H1 (cell line): ENCODE measurements at regions of chr1 and their contacts with region 1.

Region 1: DNA sequence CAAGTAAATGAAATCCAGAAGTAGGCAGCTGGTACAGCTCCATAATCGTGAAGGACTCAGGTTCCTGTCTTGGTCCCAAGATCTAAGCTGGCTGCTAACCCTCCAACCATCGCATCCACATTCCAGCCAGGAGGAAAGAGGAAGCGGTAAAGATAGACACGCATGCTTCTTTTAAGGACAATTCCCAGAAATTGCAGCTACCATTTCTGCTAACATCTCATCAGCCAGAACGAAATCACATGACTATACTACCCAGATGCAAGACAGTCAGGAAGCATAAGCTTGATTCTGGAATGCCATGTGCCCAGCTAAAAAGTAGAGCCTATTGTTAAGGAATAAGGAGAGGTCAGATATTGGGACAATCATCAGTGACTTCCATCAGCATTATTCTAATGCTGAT is 110.4 kb downstream of the EPHB2 start:
- DNase-seq: no peak
- H3K4me3 ChIP-seq: no peak overlapping the region
- H3K27ac ChIP-seq: no peak overlapping the region
- H3K4me1 ChIP-seq: peaks cover 0 to 5% (median 1%) of the 10 kb centered on the region in 4 experiments; a peak in 4 of 7 replicates
- H3K27me3 ChIP-seq: no peaks in the 10 kb centered on the region
- CTCF ChIP-seq: no peak
- EP300 ChIP-seq: no peak
- POLR2A ChIP-seq: no peak
- RAD21 ChIP-seq: no peak

Region 2: GRCh38 chr1:22575532-22576149 is 245.4 kb before region 1 on chr1:
- CTCF ChIA-PET with region 1: no interaction called
- POLR2A ChIA-PET with region 1: no interaction called
- DNase-seq: no peak
- H3K4me3 ChIP-seq: no peak overlapping the region
- H3K27ac ChIP-seq: no peak overlapping the region
- H3K4me1 ChIP-seq: peaks cover 0 to 7% (median 1%) of the 10 kb centered on the region in 4 experiments; a peak in 3 of 7 replicates
- H3K27me3 ChIP-seq: no peaks in the 10 kb centered on the region
- CTCF ChIP-seq: no peak
- EP300 ChIP-seq: no peak
- POLR2A ChIP-seq: no peak
- RAD21 ChIP-seq: no peak

Region 3: GRCh38 chr1:22808676-22809483 is 12.1 kb before region 1 on chr1:
- CTCF ChIA-PET with region 1: interaction called, 18 read pairs
- POLR2A ChIA-PET with region 1: interaction called, 4 read pairs
- DNase-seq: no peak
- H3K4me3 ChIP-seq: no peak overlapping the region
- H3K27ac ChIP-seq: no peak overlapping the region
- H3K4me1 ChIP-seq: peaks cover 9 to 32% (median 18%) of the 10 kb centered on the region in 4 experiments
- H3K27me3 ChIP-seq: no peaks in the 10 kb centered on the region
- CTCF ChIP-seq: no peak
- EP300 ChIP-seq: no peak
- POLR2A ChIP-seq: no peak
- RAD21 ChIP-seq: no peak